ENCODE measurements at regions of chr2 and their contacts with region 1.

Region 1: DNA sequence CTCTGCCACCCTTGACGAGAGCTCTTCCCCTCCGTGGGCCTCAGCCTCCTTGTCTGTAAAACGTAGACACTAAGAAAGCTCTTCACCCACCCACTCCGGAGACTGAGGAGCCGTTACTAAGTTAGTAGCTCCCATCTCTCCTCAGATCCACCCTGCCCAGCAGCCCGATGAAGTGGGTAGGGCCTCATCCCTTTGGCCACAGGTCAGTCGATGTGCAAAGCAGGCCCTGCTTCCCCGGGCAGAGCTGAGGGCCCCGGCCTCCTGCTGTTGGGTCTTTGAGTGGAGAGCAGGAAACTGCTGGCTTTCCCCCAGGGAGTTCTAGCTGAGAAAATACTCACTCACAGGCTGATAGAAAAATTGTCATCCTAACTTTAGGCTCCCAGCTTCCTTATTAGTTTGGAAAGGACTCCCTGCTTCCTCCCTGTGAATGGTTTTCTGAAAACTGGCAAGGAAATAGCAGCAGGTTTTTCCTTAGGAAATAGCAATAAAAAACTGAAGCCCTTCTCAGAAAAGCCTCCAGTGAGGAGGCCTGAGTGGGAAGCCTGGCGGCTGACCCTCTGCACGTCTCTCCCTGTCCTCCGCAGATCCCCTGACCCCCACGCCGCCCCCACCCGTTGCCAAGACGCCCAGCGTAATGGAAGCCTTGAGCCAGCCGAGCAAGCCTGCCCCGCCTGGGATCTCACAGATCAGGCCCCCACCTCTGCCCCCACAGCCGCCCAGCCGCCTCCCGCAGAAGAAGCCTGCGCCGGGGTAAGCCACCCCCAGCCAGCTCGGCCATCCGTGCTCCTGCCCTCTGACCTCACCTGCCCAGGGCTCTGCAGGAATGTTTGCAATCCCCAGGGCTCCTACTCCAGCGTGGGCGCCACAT is 30.2 kb downstream of the ITGB1BP1 start:
- DNase-seq: no peak
- H3K4me3 ChIP-seq: no peak overlapping the region
- H3K27ac ChIP-seq: no peak overlapping the region
- H3K4me1 ChIP-seq: 0 out of 2 replicates have a peak, but pooled peaks cover 4% of the 10 kb centered on the region
- H3K27me3 ChIP-seq: no peaks in the 10 kb centered on the region
- CTCF ChIP-seq: no peak

Region 2: DNA sequence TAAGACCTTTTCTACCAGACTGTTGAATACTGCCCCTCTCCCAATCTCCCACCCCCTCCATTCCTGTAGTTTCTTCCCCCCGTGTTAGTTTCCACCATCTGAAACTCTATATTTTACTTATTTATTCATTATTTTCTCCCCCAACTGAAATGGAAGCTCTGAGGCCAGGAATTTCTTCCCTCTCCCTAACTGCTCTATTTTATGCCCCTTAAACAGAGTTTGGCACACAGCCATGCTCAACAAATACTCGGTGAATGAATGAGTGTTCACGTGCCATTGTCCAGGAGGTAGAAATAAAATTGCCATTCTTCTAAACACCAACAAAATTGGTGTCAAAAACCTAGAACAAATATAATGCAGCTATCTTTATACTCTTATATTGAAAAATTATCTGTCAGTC is 24.6 kb after region 1 on chr2:
- CTCF ChIA-PET with region 1: interaction called, 10 read pairs
- POLR2A ChIA-PET with region 1: no interaction called
- intact Hi-C with region 1: no loop called
- DNase-seq: no peak
- H3K4me3 ChIP-seq: no peak overlapping the region
- H3K27ac ChIP-seq: no peak overlapping the region
- H3K4me1 ChIP-seq: peaks cover 9% of the 10 kb centered on the region
- H3K27me3 ChIP-seq: no peaks in the 10 kb centered on the region
- CTCF ChIP-seq: no peak

Region 3: DNA sequence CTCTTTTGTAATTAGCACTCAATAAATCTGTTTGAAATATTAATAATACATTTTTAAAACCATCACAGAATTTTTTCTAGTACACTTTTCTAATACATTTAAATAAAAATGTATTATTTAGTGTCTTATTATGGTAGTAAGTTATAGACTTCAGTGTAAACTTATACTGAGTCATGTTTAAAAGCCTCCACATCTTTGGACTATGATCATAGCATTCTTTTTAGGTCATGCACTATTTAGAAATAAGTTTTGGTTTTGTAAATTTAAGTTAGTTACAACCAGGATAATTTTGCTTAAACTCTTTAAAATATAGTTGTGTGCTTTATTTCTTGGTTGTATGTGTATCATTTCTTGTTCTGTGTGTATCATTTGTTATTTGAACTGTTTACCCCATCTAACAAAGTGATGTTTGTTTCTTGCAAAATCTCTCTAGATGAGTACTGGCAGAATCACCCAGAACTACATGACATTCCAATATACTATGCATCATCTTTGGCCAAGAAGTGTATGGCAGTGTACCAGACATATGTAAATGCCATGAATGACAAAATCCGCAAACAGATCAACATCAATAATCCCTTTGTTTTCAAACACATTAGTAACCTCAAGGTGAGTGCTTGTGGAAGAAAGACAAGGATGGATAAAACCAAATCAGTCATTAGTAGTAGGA is 47.1 kb after region 1 on chr2:
- CTCF ChIA-PET with region 1: no interaction called
- POLR2A ChIA-PET with region 1: no interaction called
- intact Hi-C with region 1: loop called (anchors 1 kb)
- DNase-seq: no peak
- H3K4me3 ChIP-seq: no peak overlapping the region
- H3K27ac ChIP-seq: no peak overlapping the region
- H3K4me1 ChIP-seq: no peaks in the 10 kb centered on the region
- H3K27me3 ChIP-seq: no peaks in the 10 kb centered on the region
- CTCF ChIP-seq: no peak